Mammary epithelial cell (primary cell): ENCODE measurements at regions of chr12 and their contacts with region 1.

Region 1: GRCh38 chr12:7207866-7208625 is 18.6 kb downstream of the PEX5 start:
- DNase-seq: no peak
- H3K4me3 ChIP-seq: no peak overlapping the region
- H3K27ac ChIP-seq: no peak overlapping the region
- H3K4me1 ChIP-seq: no peaks in the 10 kb centered on the region
- H3K27me3 ChIP-seq: no peaks in the 10 kb centered on the region
- CTCF ChIP-seq: no peak

Region 2: GRCh38 chr12:7118881-7119280 is 89.2 kb before region 1 on chr12:
- CTCF ChIA-PET with region 1: no interaction called
- dilution Hi-C with region 1: loop called (anchors 5 kb)
- in situ Hi-C with region 1: no loop called
- intact Hi-C with region 1: no loop called
- DNase-seq: no peak
- H3K4me3 ChIP-seq: no peak overlapping the region
- H3K27ac ChIP-seq: no peak overlapping the region
- H3K4me1 ChIP-seq: no peaks in the 10 kb centered on the region
- H3K27me3 ChIP-seq: no peaks in the 10 kb centered on the region
- CTCF ChIP-seq: no peak

Region 3: DNA sequence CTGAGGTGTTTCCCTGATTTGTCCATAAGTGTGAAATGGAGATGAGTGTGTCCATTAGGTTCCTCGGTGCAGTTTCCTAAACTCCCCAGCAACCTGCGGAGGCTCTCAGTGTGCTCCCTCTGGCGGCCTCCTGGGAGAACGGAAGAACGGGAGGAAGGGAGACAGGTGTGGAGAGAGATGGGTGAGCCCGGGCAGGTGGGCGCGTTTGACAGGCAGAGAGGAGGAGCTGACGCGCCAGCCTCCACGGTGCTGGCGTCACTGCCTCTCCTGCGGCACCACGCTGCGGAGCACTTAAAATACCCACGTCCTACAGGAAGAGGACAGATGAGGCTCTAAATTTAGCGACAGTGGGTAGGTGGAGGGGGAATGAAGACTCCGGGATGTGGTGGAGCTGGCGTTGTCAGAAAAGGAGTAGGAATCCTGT is 45.3 kb before region 1 on chr12:
- CTCF ChIA-PET with region 1: no interaction called
- dilution Hi-C with region 1: loop called (anchors 5 kb)
- in situ Hi-C with region 1: no loop called
- intact Hi-C with region 1: no loop called
- DNase-seq: peak; percentile 58
- H3K4me3 ChIP-seq: no peak overlapping the region
- H3K27ac ChIP-seq: no peak overlapping the region
- H3K4me1 ChIP-seq: peaks cover 2% of the 10 kb centered on the region
- H3K27me3 ChIP-seq: no peaks in the 10 kb centered on the region
- CTCF ChIP-seq: peak; percentile 80 to 92

Region 4: DNA sequence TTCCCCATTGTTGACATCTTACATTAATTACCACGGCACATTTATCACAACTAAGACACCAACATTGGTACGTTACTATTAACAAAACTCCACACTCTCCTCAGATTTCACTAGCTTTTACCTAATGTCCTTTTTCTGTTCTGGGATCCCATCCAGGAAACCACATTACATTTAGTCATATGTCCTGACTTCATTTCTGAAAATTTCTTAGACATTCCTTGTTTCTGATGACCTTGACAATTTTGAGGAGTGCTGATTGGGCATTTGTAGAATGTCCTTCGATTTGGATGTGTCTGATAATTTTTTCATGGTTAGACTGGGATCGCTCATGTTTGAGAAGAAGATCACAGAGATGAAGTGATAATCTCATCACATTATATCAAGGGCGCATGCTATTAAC is 61.2 kb after region 1 on chr12:
- CTCF ChIA-PET with region 1: no interaction called
- dilution Hi-C with region 1: no loop called
- in situ Hi-C with region 1: no loop called
- intact Hi-C with region 1: no loop called
- DNase-seq: peak; percentile 5
- H3K4me3 ChIP-seq: no peak overlapping the region
- H3K27ac ChIP-seq: no peak overlapping the region
- H3K4me1 ChIP-seq: no peaks in the 10 kb centered on the region
- H3K27me3 ChIP-seq: no peaks in the 10 kb centered on the region
- CTCF ChIP-seq: no peak

Region 5: GRCh38 chr12:7304456-7304855 is 96.4 kb after region 1 on chr12:
- CTCF ChIA-PET with region 1: no interaction called
- dilution Hi-C with region 1: no loop called
- in situ Hi-C with region 1: no loop called
- intact Hi-C with region 1: no loop called
- DNase-seq: no peak
- H3K4me3 ChIP-seq: no peak overlapping the region
- H3K27ac ChIP-seq: no peak overlapping the region
- H3K4me1 ChIP-seq: no peaks in the 10 kb centered on the region
- H3K27me3 ChIP-seq: no peaks in the 10 kb centered on the region
- CTCF ChIP-seq: no peak

Region 6: GRCh38 chr12:7339675-7340074 is 131.6 kb after region 1 on chr12:
- CTCF ChIA-PET with region 1: no interaction called
- dilution Hi-C with region 1: no loop called
- in situ Hi-C with region 1: no loop called
- intact Hi-C with region 1: no loop called
- DNase-seq: no peak
- H3K4me3 ChIP-seq: no peak overlapping the region
- H3K27ac ChIP-seq: no peak overlapping the region
- H3K4me1 ChIP-seq: no peaks in the 10 kb centered on the region
- H3K27me3 ChIP-seq: no peaks in the 10 kb centered on the region
- CTCF ChIP-seq: no peak